ENCODE measurements at regions of chr7 and their contacts with region 1.

Region 1: DNA sequence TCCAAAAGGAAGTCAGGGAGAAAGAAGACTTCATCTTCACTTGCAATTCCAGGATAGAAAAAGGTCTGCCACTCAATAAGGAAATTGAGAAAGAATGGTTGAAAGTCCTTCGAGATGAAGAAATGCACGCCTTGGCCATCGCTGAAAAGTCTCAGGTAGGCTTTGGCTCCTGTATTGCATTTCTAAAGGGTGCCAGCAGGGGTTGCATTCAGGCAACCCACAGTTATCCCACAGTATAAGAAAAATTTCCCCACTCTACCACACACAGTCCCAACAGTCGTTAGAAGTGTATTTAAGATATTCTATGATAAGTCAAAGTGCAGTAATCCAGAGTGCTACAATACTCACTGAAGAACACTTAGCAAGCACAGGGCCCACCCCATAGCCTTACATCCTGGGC is 93.4 kb upstream of the FGL2 start:
- DNase-seq: no peak

Region 2: GRCh38 chr7:77252506-77252905 is 40.5 kb before region 1 on chr7:
- intact Hi-C with region 1: no loop called
- DNase-seq: no peak

Region 3: GRCh38 chr7:77266291-77266794 is 26.7 kb before region 1 on chr7:
- intact Hi-C with region 1: loop called in 1 of 2 experiments (anchors 1 kb)
- DNase-seq: no peak

Region 4: DNA sequence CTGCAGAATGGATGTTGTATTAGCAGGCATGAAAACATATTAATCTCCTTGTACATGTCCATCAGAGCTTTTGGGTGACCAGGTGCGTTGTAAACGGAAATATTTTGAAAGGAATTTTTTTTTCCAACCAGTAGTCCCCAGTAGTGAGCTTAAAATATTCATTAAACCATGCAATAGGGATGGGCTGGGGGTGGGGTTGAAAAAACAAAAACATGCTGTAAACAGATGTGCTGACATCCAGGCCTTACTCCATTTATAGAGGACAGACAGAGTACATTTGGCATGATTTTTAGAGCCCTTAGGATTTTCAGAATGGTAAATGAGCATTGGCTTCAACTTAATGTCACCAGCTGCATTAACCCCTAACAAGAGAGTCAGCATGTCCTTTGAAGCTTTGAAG is 294.2 kb after region 1 on chr7:
- intact Hi-C with region 1: no loop called
- DNase-seq: no peak

Region 5: DNA sequence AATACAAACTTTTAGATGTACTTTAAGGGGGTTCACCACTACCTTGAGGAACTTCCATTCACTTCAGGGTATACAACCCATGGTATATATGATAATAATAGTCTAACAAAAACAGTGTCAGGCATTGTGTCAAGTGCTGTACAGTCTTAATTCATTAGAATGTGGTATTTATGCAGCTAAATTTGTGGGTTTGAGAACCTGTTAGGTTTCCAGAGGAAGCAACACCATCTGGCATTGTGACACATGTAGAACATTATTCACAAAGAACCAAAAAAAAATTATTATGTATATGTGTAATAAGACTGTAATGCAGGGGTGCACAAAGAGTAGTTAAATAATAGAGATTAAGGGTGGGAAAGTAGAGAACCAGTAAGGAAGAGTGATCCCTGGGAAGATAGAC is 478.9 kb after region 1 on chr7:
- intact Hi-C with region 1: no loop called
- DNase-seq: no peak